Mammary epithelial cell (primary cell): ENCODE measurements at regions of chr18 and their contacts with region 1.

Region 1: DNA sequence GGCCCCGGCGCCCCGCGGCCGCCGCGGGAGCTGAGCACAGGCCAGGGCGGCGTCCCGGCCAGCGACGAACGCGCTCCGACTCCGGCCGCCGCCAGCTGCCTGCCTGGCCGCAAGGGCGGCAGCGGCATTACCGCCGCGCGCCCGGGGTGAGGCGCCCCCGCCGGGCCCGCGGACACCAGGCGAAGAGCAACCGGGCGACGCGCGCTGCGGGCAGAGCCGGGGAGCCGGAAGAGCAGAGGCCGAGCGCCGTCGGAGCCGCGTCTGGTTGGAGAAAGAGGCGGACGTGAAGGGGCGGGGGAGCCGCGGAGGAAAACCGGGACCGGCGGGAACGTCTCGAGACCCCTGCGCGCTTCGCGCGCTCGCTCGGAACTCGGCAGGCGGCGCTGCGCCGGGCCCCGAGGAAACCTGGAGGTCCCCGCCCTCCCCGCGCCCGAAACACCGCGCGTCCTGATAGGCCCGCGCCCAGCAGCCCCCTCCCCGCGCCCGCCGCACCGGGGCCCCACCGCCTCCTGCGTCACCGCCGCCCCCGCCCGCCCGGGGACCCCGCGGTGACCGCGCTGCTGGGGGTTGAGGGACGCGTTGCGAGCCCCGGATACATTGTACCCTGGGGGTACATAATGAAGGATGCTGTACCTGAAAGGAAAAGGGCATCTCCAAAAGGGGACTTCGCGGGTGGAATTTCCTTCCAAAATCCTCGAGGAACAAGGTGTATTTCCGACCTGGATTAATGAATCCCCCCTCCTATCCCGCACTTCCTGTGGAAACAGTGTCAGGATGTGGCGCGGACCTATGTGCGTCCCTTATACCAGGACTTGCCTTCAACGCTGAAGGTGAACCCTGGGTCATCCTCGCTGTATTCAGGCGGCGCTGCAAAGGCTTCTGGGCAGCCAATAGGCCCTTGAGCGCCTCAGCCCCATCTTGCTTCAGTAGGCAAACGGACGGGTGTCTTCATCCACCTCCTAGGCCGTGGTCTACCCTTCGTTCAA is 1.0 kb upstream of the B4GALT6 start:
- DNase-seq: peak; percentile 81
- H3K4me3 ChIP-seq: peak overlapping the region; percentile 23 to 80 (median 68)
- H3K27ac ChIP-seq: no peak overlapping the region
- H3K4me1 ChIP-seq: peaks cover 29% of the 10 kb centered on the region
- H3K27me3 ChIP-seq: no peaks in the 10 kb centered on the region
- CTCF ChIP-seq: peak; percentile 29 to 44

Region 2: GRCh38 chr18:31648966-31649429 is 36.4 kb before region 1 on chr18:
- CTCF ChIA-PET with region 1: no interaction called
- dilution Hi-C with region 1: no loop called
- in situ Hi-C with region 1: no loop called
- intact Hi-C with region 1: loop called (anchors 2 kb)
- DNase-seq: peak; percentile 74
- H3K4me3 ChIP-seq: no peak overlapping the region
- H3K27ac ChIP-seq: peak overlapping the region; percentile 27
- H3K4me1 ChIP-seq: peaks cover 23% of the 10 kb centered on the region
- H3K27me3 ChIP-seq: no peaks in the 10 kb centered on the region
- CTCF ChIP-seq: no peak